ENCODE measurements at regions of chr6 and their contacts with region 1.

Region 1: GRCh38 chr6:144055121-144055931 is 40.0 kb downstream of the SF3B5 start:
- DNase-seq: peak; percentile 37
- H3K4me3 Mint-ChIP-seq: peak overlapping the region; percentile 83
- H3K27ac Mint-ChIP-seq: peak overlapping the region; percentile 98
- H3K4me1 Mint-ChIP-seq: peaks cover 48% of the 10 kb centered on the region
- H3K27me3 Mint-ChIP-seq: no peaks in the 10 kb centered on the region

Region 2: GRCh38 chr6:143441680-143442545 is 613.4 kb before region 1 on chr6:
- intact Hi-C with region 1: loop called (anchors 2 kb)
- DNase-seq: peak; percentile 13
- H3K4me3 Mint-ChIP-seq: peak overlapping the region; percentile 53
- H3K27ac Mint-ChIP-seq: peak overlapping the region; percentile 91
- H3K4me1 Mint-ChIP-seq: peaks cover 61% of the 10 kb centered on the region
- H3K27me3 Mint-ChIP-seq: no peaks in the 10 kb centered on the region

Region 3: GRCh38 chr6:143986463-143987065 is 68.8 kb before region 1 on chr6:
- intact Hi-C with region 1: no loop called
- DNase-seq: no peak
- H3K4me3 Mint-ChIP-seq: no peak overlapping the region
- H3K27ac Mint-ChIP-seq: no peak overlapping the region
- H3K4me1 Mint-ChIP-seq: no peaks in the 10 kb centered on the region
- H3K27me3 Mint-ChIP-seq: no peaks in the 10 kb centered on the region

Region 4: DNA sequence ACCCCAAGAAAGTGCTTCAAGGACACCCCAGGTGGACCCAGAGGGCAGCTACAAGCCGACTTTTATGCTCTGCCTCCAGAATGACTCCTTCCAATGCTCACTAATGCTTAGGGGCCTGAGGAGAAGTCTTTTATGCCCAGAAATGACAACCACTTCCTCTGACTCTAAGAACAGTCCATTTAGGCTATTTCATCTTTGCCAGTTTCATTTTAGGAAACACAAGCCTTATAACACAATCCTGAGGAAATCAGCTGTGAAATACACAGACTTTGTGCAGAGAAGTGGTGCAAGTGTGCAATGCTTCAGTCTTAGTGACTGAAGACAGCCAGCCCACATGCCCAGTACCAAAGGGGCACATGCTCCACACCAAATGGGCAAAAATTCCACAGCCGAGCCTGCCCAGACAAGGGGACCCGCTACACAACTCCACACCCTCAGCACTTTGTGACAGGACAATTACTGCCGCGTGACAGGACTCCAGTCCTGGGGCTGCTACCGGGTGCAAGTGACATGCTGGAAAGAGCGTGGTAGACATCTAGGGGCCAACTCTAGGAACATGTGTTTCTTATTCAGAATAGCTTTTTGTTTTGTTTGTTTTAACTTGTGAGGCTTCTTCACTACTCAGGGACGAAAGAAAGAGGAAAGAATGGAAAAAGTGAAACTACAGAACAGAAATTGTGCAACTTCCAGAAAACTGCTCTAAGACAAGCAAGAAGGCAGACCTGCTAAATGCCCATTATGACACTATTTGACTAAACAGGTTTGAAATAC is 19.1 kb before region 1 on chr6:
- intact Hi-C with region 1: loop called (anchors 1 kb)
- DNase-seq: peak; percentile 8
- H3K4me3 Mint-ChIP-seq: peak overlapping the region; percentile 17
- H3K27ac Mint-ChIP-seq: peak overlapping the region; percentile 1
- H3K4me1 Mint-ChIP-seq: peaks cover 17% of the 10 kb centered on the region
- H3K27me3 Mint-ChIP-seq: peaks cover under 1% of the 10 kb centered on the region

Region 5: GRCh38 chr6:144073024-144073423 is 17.7 kb after region 1 on chr6:
- intact Hi-C with region 1: no loop called
- DNase-seq: no peak
- H3K4me3 Mint-ChIP-seq: no peak overlapping the region
- H3K27ac Mint-ChIP-seq: no peak overlapping the region
- H3K4me1 Mint-ChIP-seq: peaks cover 19% of the 10 kb centered on the region
- H3K27me3 Mint-ChIP-seq: peaks cover 10% of the 10 kb centered on the region

Region 6: DNA sequence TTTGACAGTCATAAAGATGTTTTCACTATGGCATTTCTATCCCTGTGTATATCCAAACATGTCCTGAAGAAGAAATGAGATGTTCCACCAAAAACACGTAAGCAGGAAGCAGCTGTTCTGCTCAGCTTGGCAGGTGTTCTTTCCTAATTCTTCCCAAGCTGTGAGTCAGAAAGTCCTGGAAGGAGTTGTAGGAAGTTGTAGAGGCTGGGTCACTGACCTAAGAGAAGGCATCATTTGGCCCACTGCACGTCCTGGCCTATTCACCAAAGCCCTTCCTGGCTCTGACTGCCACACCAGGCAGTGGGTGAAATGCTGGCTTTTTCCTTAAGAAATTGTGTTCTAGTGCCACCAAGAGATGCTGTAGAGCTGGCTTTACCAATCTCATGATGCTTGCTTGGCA is 135.3 kb after region 1 on chr6:
- intact Hi-C with region 1: no loop called
- DNase-seq: no peak
- H3K4me3 Mint-ChIP-seq: no peak overlapping the region
- H3K27ac Mint-ChIP-seq: no peak overlapping the region
- H3K4me1 Mint-ChIP-seq: peaks cover 12% of the 10 kb centered on the region
- H3K27me3 Mint-ChIP-seq: no peaks in the 10 kb centered on the region